ENCODE measurements at regions of chr17 and their contacts with region 1.

Region 1: DNA sequence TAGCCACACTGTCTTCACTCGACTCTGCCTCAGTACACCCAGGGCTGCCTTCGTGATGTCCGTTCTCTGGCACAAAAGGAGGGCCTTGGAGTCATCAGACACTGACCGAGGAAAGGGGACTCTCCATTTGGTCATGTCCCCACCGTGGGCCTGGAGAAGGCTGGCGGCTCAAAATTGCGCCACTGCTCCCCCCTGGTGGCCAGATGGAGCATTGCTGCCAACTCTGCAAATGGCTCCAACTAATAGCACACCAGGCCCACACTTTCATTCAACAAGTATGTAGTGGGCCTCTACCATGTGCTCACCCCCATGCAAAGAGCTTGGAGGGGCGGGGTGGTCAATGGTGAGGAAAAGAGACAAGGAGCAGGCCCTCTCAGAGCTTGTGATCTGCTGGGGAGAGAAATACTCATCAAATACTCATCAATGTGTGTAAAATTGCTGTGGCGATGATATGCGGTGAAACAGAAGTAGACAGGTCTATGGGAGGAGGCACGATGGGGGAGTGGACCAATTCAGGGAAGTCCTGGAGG is 5.2 kb upstream of the GRIN2C start:
- DNase-seq: peak; percentile 81
- ATAC-seq: peak; percentile 78
- H3K4me3 ChIP-seq: no peak overlapping the region
- H3K4me3 Mint-ChIP-seq: no peak overlapping the region
- H3K27ac ChIP-seq: no peak overlapping the region
- H3K27ac Mint-ChIP-seq: no peak overlapping the region
- H3K4me1 ChIP-seq: peaks cover 25 to 26% of the 10 kb centered on the region in 2 donors
- H3K4me1 Mint-ChIP-seq: peaks cover 18% of the 10 kb centered on the region
- H3K27me3 ChIP-seq: peaks cover 0 to 36% (median 11%) of the 10 kb centered on the region in 4 experiments
- H3K27me3 Mint-ChIP-seq: peaks cover 16% of the 10 kb centered on the region
- CTCF ChIP-seq: peak; percentile 94

Region 2: GRCh38 chr17:74566132-74566753 is 298.7 kb before region 1 on chr17:
- CTCF ChIA-PET with region 1: interaction called, 5 read pairs
- POLR2A ChIA-PET with region 1: no interaction called
- intact Hi-C with region 1: loop called (anchors 5 kb)
- DNase-seq: peak; percentile 59
- ATAC-seq: peak; percentile 39
- H3K4me3 ChIP-seq: no peak overlapping the region
- H3K4me3 Mint-ChIP-seq: no peak overlapping the region
- H3K27ac ChIP-seq: no peak overlapping the region
- H3K27ac Mint-ChIP-seq: no peak overlapping the region
- H3K4me1 ChIP-seq: peaks cover 21 to 28% of the 10 kb centered on the region in 2 donors
- H3K4me1 Mint-ChIP-seq: peaks cover 10% of the 10 kb centered on the region
- H3K27me3 ChIP-seq: peaks cover 0 to 50% (median 6%) of the 10 kb centered on the region in 4 experiments
- H3K27me3 Mint-ChIP-seq: peaks cover 61% of the 10 kb centered on the region
- CTCF ChIP-seq: peak; percentile 64

Region 3: GRCh38 chr17:74742153-74742515 is 122.8 kb before region 1 on chr17:
- CTCF ChIA-PET with region 1: interaction called, 45 read pairs
- POLR2A ChIA-PET with region 1: no interaction called
- intact Hi-C with region 1: loop called (anchors 1 kb)
- DNase-seq: peak; percentile 67
- ATAC-seq: peak; percentile 56
- H3K4me3 ChIP-seq: peak overlapping the region in 2 of 5 experiments; percentile 21 to 34
- H3K4me3 Mint-ChIP-seq: peak overlapping the region; percentile 82
- H3K27ac ChIP-seq: peak overlapping the region; percentile 42 to 62
- H3K27ac Mint-ChIP-seq: peak overlapping the region; percentile 96
- H3K4me1 ChIP-seq: peaks cover 69 to 82% of the 10 kb centered on the region in 2 donors
- H3K4me1 Mint-ChIP-seq: peaks cover 71% of the 10 kb centered on the region
- H3K27me3 ChIP-seq: no peaks in the 10 kb centered on the region
- H3K27me3 Mint-ChIP-seq: no peaks in the 10 kb centered on the region
- CTCF ChIP-seq: no peak

Region 4: DNA sequence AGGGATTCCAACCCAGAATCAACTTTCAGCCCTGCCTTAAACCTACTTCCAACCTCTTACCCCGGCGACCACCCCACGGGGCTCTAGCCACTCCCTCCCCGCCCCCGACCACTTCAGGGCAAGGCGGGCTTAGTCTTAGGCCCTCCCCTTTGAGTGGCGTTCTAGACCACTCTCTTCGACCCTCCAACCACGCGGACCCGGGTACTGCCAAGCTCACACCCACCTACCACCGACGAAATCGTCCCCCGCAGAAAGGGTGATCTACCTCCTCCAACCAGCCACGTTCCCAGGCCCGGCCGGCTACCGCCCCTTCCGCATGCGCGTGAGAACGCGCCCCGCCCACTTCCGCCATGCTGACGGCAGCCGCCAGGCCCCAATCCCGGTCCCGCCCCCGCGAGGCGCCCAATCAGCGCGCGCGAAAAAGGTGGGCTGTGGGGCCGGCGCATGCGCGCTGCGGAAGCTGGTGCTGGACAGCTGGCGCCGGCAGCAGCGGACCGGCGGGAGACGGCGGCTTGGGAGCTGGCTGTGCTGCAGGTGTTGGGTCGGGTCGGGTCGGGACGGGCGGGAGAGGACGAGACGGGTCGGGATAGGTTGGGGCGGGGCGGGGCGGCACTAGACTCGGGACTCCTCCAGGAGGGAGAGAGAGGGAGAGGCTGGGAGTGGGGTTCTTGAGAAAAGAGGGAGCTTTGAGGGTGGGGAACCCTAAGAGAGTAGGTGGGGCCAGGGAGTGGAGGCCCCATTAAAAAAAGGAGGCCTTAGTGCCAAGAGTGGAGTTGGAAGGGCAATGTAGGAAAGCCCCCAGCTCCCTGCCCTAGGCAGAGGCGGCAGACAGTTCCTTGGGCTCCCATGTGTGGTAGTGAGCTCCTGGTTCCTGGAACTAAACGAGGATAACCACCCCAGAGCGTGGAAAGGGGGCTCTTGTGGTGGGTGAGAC is 88.6 kb before region 1 on chr17 and contains the start of gene NAT9:
- CTCF ChIA-PET with region 1: interaction called, 18 read pairs
- POLR2A ChIA-PET with region 1: no interaction called
- intact Hi-C with region 1: no loop called
- DNase-seq: peak; percentile 98
- ATAC-seq: peak; percentile 79
- H3K4me3 ChIP-seq: peak within 1 kb of the TSS; percentile 66 to 79 (median 77)
- H3K4me3 Mint-ChIP-seq: peak within 1 kb of the TSS; percentile 99
- H3K27ac ChIP-seq: peak within 1 kb of the TSS; percentile 39 to 75
- H3K27ac Mint-ChIP-seq: peak within 1 kb of the TSS; percentile 96
- H3K4me1 ChIP-seq: peaks cover 40 to 46% of the 10 kb centered on the region in 2 donors
- H3K4me1 Mint-ChIP-seq: peaks cover 57% of the 10 kb centered on the region
- H3K27me3 ChIP-seq: no peaks in the 10 kb centered on the region
- H3K27me3 Mint-ChIP-seq: no peaks in the 10 kb centered on the region
- CTCF ChIP-seq: no peak
- total RNA-seq, gene NAT9: 66.6 and 71.1 TPM in 2 replicates

Region 5: GRCh38 chr17:74790161-74791054 is 74.5 kb before region 1 on chr17:
- CTCF ChIA-PET with region 1: interaction called, 181 read pairs
- POLR2A ChIA-PET with region 1: no interaction called
- intact Hi-C with region 1: loop called (anchors 1 kb)
- DNase-seq: no peak
- ATAC-seq: no peak
- H3K4me3 ChIP-seq: no peak overlapping the region
- H3K4me3 Mint-ChIP-seq: no peak overlapping the region
- H3K27ac ChIP-seq: no peak overlapping the region
- H3K27ac Mint-ChIP-seq: no peak overlapping the region
- H3K4me1 ChIP-seq: peaks cover 8 to 24% of the 10 kb centered on the region in 2 donors
- H3K4me1 Mint-ChIP-seq: peaks cover 22% of the 10 kb centered on the region
- H3K27me3 ChIP-seq: no peaks in the 10 kb centered on the region
- H3K27me3 Mint-ChIP-seq: no peaks in the 10 kb centered on the region
- CTCF ChIP-seq: no peak

Region 6: GRCh38 chr17:74842599-74843351 is 22.2 kb before region 1 on chr17:
- CTCF ChIA-PET with region 1: interaction called, 13 read pairs
- POLR2A ChIA-PET with region 1: no interaction called
- intact Hi-C with region 1: no loop called
- DNase-seq: peak; percentile 44
- ATAC-seq: peak; percentile 31
- H3K4me3 ChIP-seq: peak overlapping the region in 3 of 5 experiments; percentile 15 to 20 (median 15)
- H3K4me3 Mint-ChIP-seq: peak overlapping the region; percentile 52
- H3K27ac ChIP-seq: no peak overlapping the region
- H3K27ac Mint-ChIP-seq: no peak overlapping the region
- H3K4me1 ChIP-seq: peaks cover 26 to 28% of the 10 kb centered on the region in 2 donors
- H3K4me1 Mint-ChIP-seq: peaks cover 25% of the 10 kb centered on the region
- H3K27me3 ChIP-seq: peaks cover 0 to 22% (median 9%) of the 10 kb centered on the region in 4 experiments
- H3K27me3 Mint-ChIP-seq: peaks cover 17% of the 10 kb centered on the region
- CTCF ChIP-seq: peak; percentile 64